Ascending aorta (tissue), 2 donors: ENCODE measurements at regions of chr22 and their contacts with region 1.

Region 1: GRCh38 chr22:24106385-24107381 is 74.6 kb upstream of the SUSD2 start:
- DNase-seq: no peak
- H3K4me3 ChIP-seq: no peak overlapping the region
- H3K27ac ChIP-seq: peak overlapping the region; percentile 75 to 83
- H3K4me1 ChIP-seq: peaks cover 14 to 17% of the 10 kb centered on the region in 2 donors
- H3K27me3 ChIP-seq: no peaks in the 10 kb centered on the region
- CTCF ChIP-seq: peak in 2 of 3 experiments; percentile 14 to 47

Region 2: GRCh38 chr22:24146194-24146616 is 39.5 kb after region 1 on chr22:
- intact Hi-C with region 1: loop called (anchors 2 kb)
- DNase-seq: no peak
- H3K4me3 ChIP-seq: peak overlapping the region; percentile 10 to 18
- H3K27ac ChIP-seq: peak overlapping the region; percentile 86 to 92
- H3K4me1 ChIP-seq: peaks cover 26 to 58% of the 10 kb centered on the region in 2 donors
- H3K27me3 ChIP-seq: no peaks in the 10 kb centered on the region
- CTCF ChIP-seq: no peak

Region 3: GRCh38 chr22:24156913-24157821 is 50.5 kb after region 1 on chr22:
- intact Hi-C with region 1: no loop called
- DNase-seq: peak; percentile 39 to 91
- H3K4me3 ChIP-seq: peak overlapping the region; percentile 74 to 92
- H3K27ac ChIP-seq: peak overlapping the region; percentile 80 to 89
- H3K4me1 ChIP-seq: peaks cover 18 to 45% of the 10 kb centered on the region in 2 donors
- H3K27me3 ChIP-seq: no peaks in the 10 kb centered on the region
- CTCF ChIP-seq: peak; percentile 79 to 84 (median 82)